Right cardiac atrium (tissue), 5 donors: ENCODE measurements at regions of chr6 and their contacts with region 1.

Region 1: GRCh38 chr6:15522427-15522826 is 140.4 kb downstream of the DTNBP1 start:
- DNase-seq: no peak
- ATAC-seq: peak; percentile 22 to 43
- H3K4me3 ChIP-seq: no peak overlapping the region
- H3K27ac ChIP-seq: no peak overlapping the region
- H3K4me1 ChIP-seq: no peaks in the 10 kb centered on the region
- H3K27me3 ChIP-seq: no peaks in the 10 kb centered on the region

Region 2: DNA sequence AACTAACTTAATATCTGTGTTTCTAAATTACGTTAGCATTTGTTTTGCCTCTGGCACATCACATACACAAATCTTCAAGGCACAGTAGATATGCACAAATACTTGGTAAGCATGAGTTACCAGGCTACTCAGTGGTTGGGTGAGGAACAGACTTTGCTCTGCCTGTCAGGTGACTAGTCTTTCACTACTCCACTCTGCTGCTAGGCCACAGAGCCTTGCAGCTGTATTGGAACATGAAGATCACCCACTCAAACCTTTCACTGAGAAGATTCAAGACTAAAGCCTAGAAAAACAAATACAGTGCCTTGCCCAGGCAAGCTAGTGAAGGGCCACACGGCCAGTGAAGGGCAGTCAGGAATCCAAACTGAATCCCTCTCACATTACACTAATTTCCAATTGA is 93.4 kb after region 1 on chr6:
- intact Hi-C with region 1: loop called in 2 of 4 experiments (anchors 10 kb)
- DNase-seq: no peak
- ATAC-seq: no peak
- H3K4me3 ChIP-seq: no peak overlapping the region
- H3K27ac ChIP-seq: no peak overlapping the region
- H3K4me1 ChIP-seq: peaks cover 2% of the 10 kb centered on the region
- H3K27me3 ChIP-seq: no peaks in the 10 kb centered on the region

Region 3: GRCh38 chr6:15662326-15663129 is 140.1 kb after region 1 on chr6 and contains the start of gene DTNBP1:
- intact Hi-C with region 1: no loop called
- DNase-seq: peak; percentile 87 to 95 (median 94)
- ATAC-seq: peak; percentile 97 to 98
- H3K4me3 ChIP-seq: peak within 1 kb of the TSS; percentile 83
- H3K27ac ChIP-seq: peak within 1 kb of the TSS; percentile 49
- H3K4me1 ChIP-seq: peaks cover 3% of the 10 kb centered on the region
- H3K27me3 ChIP-seq: no peaks in the 10 kb centered on the region
- total RNA-seq, gene DTNBP1: 18.9 to 34.0 (median 26.7) TPM